Activated CD4-positive, alpha-beta memory T cell treated with anti-CD3 and anti-CD28 coated beads for 36 hours (primary cell): ENCODE measurements at regions of chr1 and their contacts with region 1.

Region 1: GRCh38 chr1:12153181-12153785 is 13.5 kb upstream of the TNFRSF1B start:
- DNase-seq: peak; percentile 65
- H3K4me3 Mint-ChIP-seq: no peak overlapping the region
- H3K27ac Mint-ChIP-seq: peak overlapping the region; percentile 90
- H3K4me1 Mint-ChIP-seq: peaks cover 88% of the 10 kb centered on the region
- H3K27me3 Mint-ChIP-seq: no peaks in the 10 kb centered on the region

Region 2: GRCh38 chr1:12087797-12088314 is 65.4 kb before region 1 on chr1:
- CTCF ChIA-PET with region 1: no interaction called
- POLR2A ChIA-PET with region 1: no interaction called
- intact Hi-C with region 1: loop called (anchors 5 kb)
- DNase-seq: peak; percentile 77
- H3K4me3 Mint-ChIP-seq: peak overlapping the region; percentile 43
- H3K27ac Mint-ChIP-seq: peak overlapping the region; percentile 90
- H3K4me1 Mint-ChIP-seq: peaks cover 46% of the 10 kb centered on the region
- H3K27me3 Mint-ChIP-seq: no peaks in the 10 kb centered on the region

Region 3: DNA sequence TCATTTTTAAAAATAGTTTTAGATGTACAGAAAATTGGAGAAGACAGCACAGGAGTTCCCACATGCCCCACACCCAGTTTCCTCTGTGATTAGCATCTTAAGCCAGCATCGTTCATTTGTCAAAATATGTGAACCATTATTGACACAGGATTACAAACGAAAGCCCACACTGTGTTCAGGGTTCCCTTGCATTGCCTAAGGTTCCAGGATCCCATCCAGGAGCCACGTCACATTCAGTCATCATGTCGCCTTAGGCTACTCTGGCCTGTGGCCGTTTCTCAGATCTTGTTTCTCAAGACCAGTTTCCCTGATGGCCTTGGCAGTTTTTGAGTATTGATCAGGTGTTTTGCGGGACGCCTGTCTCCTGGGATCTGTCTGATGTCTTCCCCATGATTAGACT is 21.2 kb before region 1 on chr1:
- CTCF ChIA-PET with region 1: interaction called, 3 read pairs
- POLR2A ChIA-PET with region 1: interaction called, 6 read pairs
- intact Hi-C with region 1: loop called (anchors 2 kb)
- DNase-seq: no peak
- H3K4me3 Mint-ChIP-seq: no peak overlapping the region
- H3K27ac Mint-ChIP-seq: peak overlapping the region; percentile 80
- H3K4me1 Mint-ChIP-seq: peaks cover 35% of the 10 kb centered on the region
- H3K27me3 Mint-ChIP-seq: no peaks in the 10 kb centered on the region